HCT116 (cell line): ENCODE measurements at regions of chr5 and their contacts with region 1.

Region 1: DNA sequence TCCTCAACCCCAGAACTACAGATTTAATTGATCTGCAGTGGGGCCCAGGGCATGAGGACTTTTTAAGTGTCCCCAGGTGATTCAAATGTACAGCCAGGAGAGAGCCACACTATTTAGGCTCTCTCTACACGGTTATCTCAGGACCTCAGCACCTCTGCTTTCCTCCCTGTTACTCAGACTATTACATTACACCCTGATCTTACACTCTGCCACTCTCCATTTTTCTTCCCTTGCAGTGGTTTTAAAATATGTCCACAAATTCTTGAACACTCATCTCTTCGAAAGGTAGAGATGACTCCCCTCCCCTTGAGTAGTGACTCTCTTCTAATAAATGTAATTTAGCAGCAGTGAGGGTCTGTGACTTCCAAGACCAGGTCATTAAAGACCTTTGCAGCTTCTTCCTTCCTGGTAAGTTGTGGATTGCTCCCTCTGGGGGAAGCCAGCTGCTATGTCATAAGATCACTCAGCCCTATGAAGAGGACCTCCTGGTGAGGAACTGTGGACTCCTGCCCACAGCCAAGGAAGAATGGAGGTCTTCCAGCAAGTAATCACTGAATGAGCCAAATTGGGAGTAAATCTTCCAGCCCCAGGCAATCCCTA is 87.5 kb upstream of the SSBP2 start:
- DNase-seq: peak; percentile 28
- ATAC-seq: peak; percentile 97
- H3K4me3 ChIP-seq: no peak overlapping the region
- H3K27ac ChIP-seq: no peak overlapping the region
- H3K4me1 ChIP-seq: peaks cover 0 to 11% of the 10 kb centered on the region in 2 experiments; a peak in 3 of 4 replicates
- H3K27me3 ChIP-seq: no peaks in the 10 kb centered on the region
- CTCF ChIP-seq: peak; percentile 23 to 77 (median 64); a peak in 5 of 6 replicates
- POLR2A ChIP-seq: no peak
- RAD21 ChIP-seq: peak; percentile 64

Region 2: DNA sequence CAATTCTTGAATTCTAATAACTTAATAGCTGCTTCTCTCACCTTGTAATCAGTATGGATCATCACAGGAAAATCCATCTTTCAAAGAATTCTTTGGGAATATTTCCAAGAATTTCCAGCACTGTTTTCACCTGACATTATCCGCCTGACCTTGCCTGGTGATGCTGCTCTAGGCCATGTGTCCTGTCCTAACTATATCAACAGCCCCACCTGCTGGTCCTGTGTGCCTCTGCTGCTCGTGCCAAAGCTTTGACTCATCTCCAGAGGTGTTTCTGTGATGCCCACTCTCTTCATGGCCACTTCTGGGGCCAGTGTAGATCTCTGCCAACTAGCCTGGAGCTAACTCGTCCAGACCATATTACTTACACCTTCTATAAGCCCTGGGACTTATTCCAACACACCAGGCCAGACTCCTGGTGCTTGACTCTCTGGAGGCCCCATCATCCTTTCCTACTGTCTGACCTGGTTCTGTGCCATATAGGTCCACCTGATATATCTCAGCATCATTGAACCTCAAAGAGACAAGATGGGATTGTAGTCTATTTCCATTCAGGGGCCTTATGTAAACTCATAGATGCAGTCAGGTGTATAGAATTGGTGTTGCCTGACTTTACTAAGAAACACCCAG is 672.8 kb before region 1 on chr5:
- CTCF ChIA-PET with region 1: no interaction called
- POLR2A ChIA-PET with region 1: no interaction called
- RAD21 ChIA-PET with region 1: no interaction called
- intact Hi-C with region 1: no loop called
- DNase-seq: peak; percentile 52
- ATAC-seq: peak; percentile 100
- H3K4me3 ChIP-seq: no peak overlapping the region
- H3K27ac ChIP-seq: no peak overlapping the region
- H3K4me1 ChIP-seq: no peaks in the 10 kb centered on the region
- H3K27me3 ChIP-seq: no peaks in the 10 kb centered on the region
- CTCF ChIP-seq: peak; percentile 71 to 93 (median 92)
- POLR2A ChIP-seq: no peak
- RAD21 ChIP-seq: peak; percentile 85

Region 3: GRCh38 chr5:81506900-81507588 is 331.4 kb before region 1 on chr5:
- CTCF ChIA-PET with region 1: interaction called, 5 read pairs
- POLR2A ChIA-PET with region 1: no interaction called
- RAD21 ChIA-PET with region 1: no interaction called
- intact Hi-C with region 1: loop called (anchors 2 kb)
- DNase-seq: peak; percentile 77
- ATAC-seq: peak; percentile 99
- H3K4me3 ChIP-seq: no peak overlapping the region
- H3K27ac ChIP-seq: no peak overlapping the region
- H3K4me1 ChIP-seq: peaks cover 0 to 5% of the 10 kb centered on the region in 2 experiments; a peak in 2 of 4 replicates
- H3K27me3 ChIP-seq: no peaks in the 10 kb centered on the region
- CTCF ChIP-seq: peak; percentile 76 to 91 (median 84)
- POLR2A ChIP-seq: no peak
- RAD21 ChIP-seq: peak; percentile 92

Region 4: DNA sequence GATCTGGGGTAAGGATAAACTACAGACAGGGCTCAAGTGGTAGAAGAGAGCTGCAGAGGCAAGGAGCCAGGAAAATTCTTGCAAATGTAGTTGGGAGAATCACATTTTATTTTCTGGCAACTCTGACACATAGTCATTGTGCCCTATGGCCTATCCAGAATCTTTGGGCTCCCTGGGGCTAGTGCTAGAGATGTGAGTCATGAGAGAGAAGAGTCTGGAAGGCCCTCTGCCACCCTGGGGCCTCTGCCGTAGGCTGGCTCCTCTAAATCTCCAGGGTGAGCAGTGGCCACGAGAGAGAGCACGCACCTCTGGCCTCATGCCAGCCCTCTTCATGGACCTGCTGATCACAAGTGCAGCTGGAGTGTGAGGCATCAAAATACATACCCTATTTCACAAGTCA is 13.2 kb before region 1 on chr5:
- CTCF ChIA-PET with region 1: interaction called, 15 read pairs
- POLR2A ChIA-PET with region 1: no interaction called
- RAD21 ChIA-PET with region 1: interaction called in 1 of 2 experiments, 3 read pairs
- intact Hi-C with region 1: no loop called
- DNase-seq: no peak
- ATAC-seq: no peak
- H3K4me3 ChIP-seq: no peak overlapping the region
- H3K27ac ChIP-seq: no peak overlapping the region
- H3K4me1 ChIP-seq: peaks cover 2 to 3% of the 10 kb centered on the region in 2 experiments
- H3K27me3 ChIP-seq: no peaks in the 10 kb centered on the region
- CTCF ChIP-seq: no peak
- POLR2A ChIP-seq: no peak
- RAD21 ChIP-seq: no peak

Region 5: GRCh38 chr5:81856948-81857928 is 18.8 kb after region 1 on chr5:
- CTCF ChIA-PET with region 1: interaction called, 10 read pairs
- POLR2A ChIA-PET with region 1: no interaction called
- RAD21 ChIA-PET with region 1: interaction called in 1 of 2 experiments, 3 read pairs
- intact Hi-C with region 1: no loop called
- DNase-seq: no peak
- ATAC-seq: peak; percentile 79
- H3K4me3 ChIP-seq: no peak overlapping the region
- H3K27ac ChIP-seq: no peak overlapping the region
- H3K4me1 ChIP-seq: peaks cover 30 to 36% of the 10 kb centered on the region in 2 experiments
- H3K27me3 ChIP-seq: no peaks in the 10 kb centered on the region
- CTCF ChIP-seq: peak; percentile 45 to 67 (median 65); a peak in 5 of 6 replicates
- POLR2A ChIP-seq: no peak
- RAD21 ChIP-seq: peak; percentile 32; the same call in 1 of the 2 replicates